Esophagus muscularis mucosa (tissue), 4 donors: ENCODE measurements at regions of chr11 and their contacts with region 1.

Region 1: DNA sequence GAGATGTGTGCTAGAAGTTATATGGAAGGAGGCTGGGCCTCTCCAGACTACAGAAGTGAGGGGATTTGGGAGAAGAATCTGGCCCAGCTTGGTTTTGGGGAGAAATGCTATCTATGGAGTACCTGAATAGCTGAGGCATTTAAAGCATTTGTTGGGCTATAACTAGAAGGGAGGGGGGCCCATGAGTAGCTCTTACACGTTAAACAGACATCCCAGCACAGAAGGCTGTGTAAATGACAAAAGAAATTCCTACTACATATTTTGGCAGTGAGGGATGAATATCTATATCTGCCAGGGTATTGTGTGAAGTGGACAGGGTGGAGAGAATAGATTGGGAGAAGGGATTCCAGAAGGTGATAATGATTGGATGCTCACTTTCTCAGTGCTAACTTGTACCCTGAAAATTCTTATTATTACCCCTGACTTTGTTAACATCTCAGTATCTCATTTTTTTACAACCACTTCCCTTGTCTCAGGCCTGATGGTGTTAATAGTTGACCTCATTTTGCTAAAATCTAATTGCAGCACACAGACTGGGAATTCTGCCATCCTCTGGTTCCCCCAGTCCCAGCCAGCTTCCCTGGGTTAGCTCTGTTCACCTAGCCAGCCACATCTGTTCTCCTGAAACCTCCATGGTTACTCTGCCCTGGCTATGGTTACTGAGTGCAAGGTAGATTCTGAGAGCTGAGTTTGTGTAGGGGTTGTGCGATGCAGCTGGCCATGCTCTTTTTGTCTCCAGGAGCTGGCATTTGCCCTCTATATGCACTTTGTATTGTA is 28.8 kb upstream of the RRM1 start:
- DNase-seq: peak; percentile 47
- H3K4me3 ChIP-seq: no peak overlapping the region
- H3K27ac ChIP-seq: peak overlapping the region; percentile 32 to 65 (median 56)
- H3K4me1 ChIP-seq: peaks cover 27 to 86% (median 66%) of the 10 kb centered on the region in 4 donors
- H3K27me3 ChIP-seq: no peaks in the 10 kb centered on the region
- CTCF ChIP-seq: no peak
- EP300 ChIP-seq: no peak
- POLR2A ChIP-seq: no peak

Region 2: DNA sequence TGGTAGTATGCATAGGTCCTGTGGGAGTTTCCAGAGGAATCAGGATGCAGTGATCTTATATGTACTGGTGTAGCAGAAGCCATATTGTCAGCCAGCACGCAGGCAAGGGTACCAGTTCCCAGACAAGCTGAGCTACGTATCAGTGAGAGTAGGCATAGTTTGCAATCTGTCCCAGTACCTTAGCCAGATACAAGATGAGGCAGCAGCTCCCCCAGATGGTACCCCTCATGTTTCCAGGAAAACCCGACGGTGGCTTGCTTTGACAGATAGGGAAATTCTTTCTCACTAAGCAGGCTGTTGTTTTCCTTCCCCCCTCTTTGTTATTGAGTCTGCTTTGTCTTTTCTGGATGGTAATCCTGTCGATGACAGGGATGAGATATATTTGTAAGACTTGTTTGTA is 80.9 kb before region 1 on chr11:
- intact Hi-C with region 1: loop called (anchors 10 kb)
- DNase-seq: no peak
- H3K4me3 ChIP-seq: no peak overlapping the region
- H3K27ac ChIP-seq: no peak overlapping the region
- H3K4me1 ChIP-seq: peaks cover 9 to 90% (median 60%) of the 10 kb centered on the region in 4 donors
- H3K27me3 ChIP-seq: no peaks in the 10 kb centered on the region
- CTCF ChIP-seq: no peak
- EP300 ChIP-seq: no peak
- POLR2A ChIP-seq: no peak

Region 3: DNA sequence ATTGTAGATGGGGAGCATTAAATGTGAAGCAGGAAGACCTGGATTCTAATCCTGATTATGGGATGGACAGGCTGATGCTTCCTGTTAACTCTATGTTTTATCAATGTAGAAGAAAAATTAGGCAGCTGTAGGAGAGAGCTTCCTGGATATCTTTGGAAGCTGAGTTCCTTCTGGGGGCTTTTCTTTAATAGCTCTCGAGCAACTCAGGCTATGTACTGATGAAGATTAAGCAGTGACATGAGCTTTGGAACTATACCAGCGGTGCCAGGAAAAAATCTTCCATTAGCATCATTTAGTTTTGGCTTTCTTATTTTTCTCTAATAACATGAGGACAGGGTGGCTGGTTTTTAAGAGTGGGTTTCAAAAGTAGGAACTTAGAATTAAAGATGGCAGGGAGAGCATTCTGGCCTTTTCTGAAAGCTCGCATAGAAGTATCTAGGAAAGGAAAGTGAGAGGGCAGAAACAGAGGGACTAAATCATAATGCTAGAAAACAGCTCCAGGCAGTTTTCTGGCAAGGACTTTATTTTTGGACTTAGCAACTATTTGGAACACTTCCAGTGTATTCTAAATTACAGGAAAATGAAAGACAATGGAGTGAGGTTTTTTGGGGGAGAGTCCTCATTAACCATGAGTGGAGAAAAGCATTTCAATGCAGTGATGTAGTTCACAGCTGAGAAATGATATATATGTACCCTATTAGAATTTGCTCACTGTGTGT is 40.4 kb before region 1 on chr11:
- intact Hi-C with region 1: loop called (anchors 5 kb)
- DNase-seq: no peak
- H3K4me3 ChIP-seq: peak overlapping the region in 3 of 4 donors; percentile 8 to 20 (median 12)
- H3K27ac ChIP-seq: peak overlapping the region; percentile 74 to 83 (median 80)
- H3K4me1 ChIP-seq: peaks cover 35 to 64% (median 55%) of the 10 kb centered on the region in 4 donors
- H3K27me3 ChIP-seq: no peaks in the 10 kb centered on the region
- CTCF ChIP-seq: no peak
- EP300 ChIP-seq: no peak
- POLR2A ChIP-seq: no peak

Region 4: GRCh38 chr11:4156571-4156970 is 90.8 kb after region 1 on chr11:
- intact Hi-C with region 1: no loop called
- DNase-seq: no peak
- H3K4me3 ChIP-seq: no peak overlapping the region
- H3K27ac ChIP-seq: no peak overlapping the region
- H3K4me1 ChIP-seq: no peaks in the 10 kb centered on the region
- H3K27me3 ChIP-seq: no peaks in the 10 kb centered on the region
- CTCF ChIP-seq: no peak
- EP300 ChIP-seq: no peak
- POLR2A ChIP-seq: no peak

Region 5: GRCh38 chr11:4430051-4430450 is 364.3 kb after region 1 on chr11:
- intact Hi-C with region 1: no loop called
- DNase-seq: no peak
- H3K4me3 ChIP-seq: no peak overlapping the region
- H3K27ac ChIP-seq: no peak overlapping the region
- H3K4me1 ChIP-seq: no peaks in the 10 kb centered on the region
- H3K27me3 ChIP-seq: no peaks in the 10 kb centered on the region
- CTCF ChIP-seq: no peak
- EP300 ChIP-seq: no peak
- POLR2A ChIP-seq: no peak